ENCODE measurements at regions of chr13 and their contacts with region 1.

Region 1: DNA sequence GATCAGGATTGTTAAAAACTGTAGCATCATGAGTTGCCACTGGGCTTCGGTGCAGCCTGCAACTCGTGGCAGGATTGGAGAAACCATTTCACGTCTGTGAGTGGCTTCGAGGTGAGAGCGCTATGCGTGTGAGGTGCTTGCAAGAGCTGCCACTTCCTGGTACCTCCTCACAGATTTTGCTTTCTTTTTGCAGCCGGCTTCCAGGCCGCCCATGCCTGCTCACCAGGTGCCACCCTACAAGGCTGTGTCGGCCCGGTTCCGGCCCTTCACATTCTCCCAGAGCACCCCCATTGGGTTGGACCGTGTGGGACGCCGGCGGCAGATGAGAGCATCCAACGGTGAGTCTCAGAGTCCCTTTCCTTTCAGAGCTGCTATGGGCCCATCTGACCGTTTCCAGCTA is 57.9 kb upstream of the C1QTNF9 start:
- DNase-seq: no peak
- H3K4me3 ChIP-seq: no peak overlapping the region
- H3K27ac ChIP-seq: no peak overlapping the region
- H3K4me1 ChIP-seq: no peaks in the 10 kb centered on the region
- H3K27me3 ChIP-seq: no peaks in the 10 kb centered on the region
- CTCF ChIP-seq: no peak

Region 2: DNA sequence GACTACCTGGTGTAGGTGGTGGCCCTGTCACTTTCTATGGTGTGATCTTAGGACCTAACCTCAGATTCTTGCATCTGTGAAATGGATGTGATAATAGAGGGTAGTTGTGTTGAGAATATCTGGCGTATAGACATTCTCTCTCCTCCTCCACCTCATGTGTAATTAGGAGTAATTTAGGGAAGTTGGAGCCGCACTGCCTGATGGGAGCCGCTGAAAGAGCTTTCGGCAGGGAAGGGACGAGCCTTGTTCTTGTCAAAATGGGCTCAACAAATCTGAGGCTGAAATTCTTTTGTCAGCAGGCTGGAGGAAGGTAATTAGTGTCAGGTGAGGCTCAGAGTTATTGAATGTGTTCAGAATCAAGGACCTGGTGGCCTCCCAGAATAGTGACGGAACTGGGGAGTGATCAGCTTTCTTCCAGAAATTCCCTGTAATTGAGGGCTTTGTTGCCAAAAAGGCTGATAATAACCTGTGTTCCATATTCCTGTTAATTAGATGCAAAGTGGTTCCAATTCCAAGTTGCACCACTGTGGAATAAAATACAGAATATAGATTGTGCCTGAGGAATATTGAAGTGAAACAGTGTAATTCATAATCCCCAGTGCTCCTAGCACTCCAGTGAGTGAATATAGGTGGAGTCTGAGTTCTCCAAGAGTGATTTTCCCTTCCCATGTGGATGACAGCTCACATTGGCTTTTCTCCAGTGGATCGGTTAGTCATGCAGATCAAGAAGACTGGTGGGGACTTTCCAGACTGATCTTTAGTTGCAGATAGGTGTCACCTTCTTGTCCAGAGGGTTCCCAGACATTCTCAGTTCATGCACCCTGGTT is 43.5 kb before region 1 on chr13:
- CTCF ChIA-PET with region 1: no interaction called
- POLR2A ChIA-PET with region 1: no interaction called
- intact Hi-C with region 1: loop called (anchors 1 kb)
- DNase-seq: no peak
- H3K4me3 ChIP-seq: no peak overlapping the region
- H3K27ac ChIP-seq: no peak overlapping the region
- H3K4me1 ChIP-seq: peaks cover 5% of the 10 kb centered on the region; the same call in 1 of the 2 replicates
- H3K27me3 ChIP-seq: no peaks in the 10 kb centered on the region
- CTCF ChIP-seq: no peak